ENCODE measurements at regions of chr5 and their contacts with region 1.

Region 1: GRCh38 chr5:133111299-133111698 is 59.5 kb downstream of the HSPA4 start:
- H3K4me3 ChIP-seq: no peak overlapping the region
- H3K27ac ChIP-seq: no peak overlapping the region
- H3K4me1 ChIP-seq: no peaks in the 10 kb centered on the region
- CTCF ChIP-seq: peak; percentile 88

Region 2: DNA sequence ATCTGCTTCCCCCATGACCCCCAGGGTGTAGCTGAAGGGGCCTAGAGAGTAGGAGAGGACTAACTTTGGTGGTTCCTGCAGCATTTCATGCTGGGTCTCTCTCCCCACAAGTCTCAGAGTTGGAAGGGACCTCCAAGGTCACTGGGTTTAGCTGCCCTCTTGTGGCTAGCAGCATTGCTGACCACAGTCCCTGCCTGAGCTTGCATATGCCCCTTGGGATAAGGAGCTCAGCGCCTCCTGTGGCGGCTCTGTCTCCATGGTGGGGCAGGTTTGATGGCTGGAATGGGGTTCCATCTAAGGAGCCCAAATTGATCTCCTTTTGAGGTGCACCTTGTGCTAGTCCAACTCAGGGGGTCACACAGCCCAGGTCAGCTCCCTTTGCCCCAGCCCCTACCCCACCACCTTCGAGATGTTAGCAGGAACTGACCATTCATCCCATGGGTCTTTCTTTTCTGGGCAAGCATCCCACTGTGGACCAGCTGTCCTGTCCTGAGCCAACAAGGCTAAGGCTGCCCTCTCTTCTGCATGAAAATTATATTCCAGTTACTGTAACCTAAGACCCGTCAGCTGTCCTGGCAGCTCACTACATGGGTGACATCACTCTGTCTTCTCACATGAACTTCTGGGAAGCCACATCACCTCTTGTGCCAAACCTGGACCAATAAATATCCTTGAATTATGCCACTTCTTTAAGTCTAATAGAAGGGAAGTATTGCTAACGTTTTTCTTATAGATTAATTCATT is 136.8 kb after region 1 on chr5:
- CTCF ChIA-PET with region 1: interaction called, 12 read pairs
- POLR2A ChIA-PET with region 1: no interaction called
- H3K4me3 ChIP-seq: no peak overlapping the region
- H3K27ac ChIP-seq: no peak overlapping the region
- H3K4me1 ChIP-seq: peaks cover 16% of the 10 kb centered on the region
- CTCF ChIP-seq: peak; percentile 64; the same call in 1 of the 2 replicates

Region 3: GRCh38 chr5:133287500-133287899 is 176.2 kb after region 1 on chr5:
- CTCF ChIA-PET with region 1: interaction called, 98 read pairs
- POLR2A ChIA-PET with region 1: no interaction called
- H3K4me3 ChIP-seq: no peak overlapping the region
- H3K27ac ChIP-seq: no peak overlapping the region
- H3K4me1 ChIP-seq: no peaks in the 10 kb centered on the region
- CTCF ChIP-seq: peak; percentile 70

Region 4: GRCh38 chr5:133944263-133945185 is 833.2 kb after region 1 on chr5:
- CTCF ChIA-PET with region 1: interaction called, 27 read pairs
- POLR2A ChIA-PET with region 1: no interaction called
- H3K4me3 ChIP-seq: no peak overlapping the region
- H3K27ac ChIP-seq: no peak overlapping the region
- H3K4me1 ChIP-seq: no peaks in the 10 kb centered on the region
- CTCF ChIP-seq: peak; percentile 65; the same call in 1 of the 2 replicates